Naive thymus-derived CD4-positive, alpha-beta T cell (primary cell): ENCODE measurements at regions of chr6 and their contacts with region 1.

Region 1: DNA sequence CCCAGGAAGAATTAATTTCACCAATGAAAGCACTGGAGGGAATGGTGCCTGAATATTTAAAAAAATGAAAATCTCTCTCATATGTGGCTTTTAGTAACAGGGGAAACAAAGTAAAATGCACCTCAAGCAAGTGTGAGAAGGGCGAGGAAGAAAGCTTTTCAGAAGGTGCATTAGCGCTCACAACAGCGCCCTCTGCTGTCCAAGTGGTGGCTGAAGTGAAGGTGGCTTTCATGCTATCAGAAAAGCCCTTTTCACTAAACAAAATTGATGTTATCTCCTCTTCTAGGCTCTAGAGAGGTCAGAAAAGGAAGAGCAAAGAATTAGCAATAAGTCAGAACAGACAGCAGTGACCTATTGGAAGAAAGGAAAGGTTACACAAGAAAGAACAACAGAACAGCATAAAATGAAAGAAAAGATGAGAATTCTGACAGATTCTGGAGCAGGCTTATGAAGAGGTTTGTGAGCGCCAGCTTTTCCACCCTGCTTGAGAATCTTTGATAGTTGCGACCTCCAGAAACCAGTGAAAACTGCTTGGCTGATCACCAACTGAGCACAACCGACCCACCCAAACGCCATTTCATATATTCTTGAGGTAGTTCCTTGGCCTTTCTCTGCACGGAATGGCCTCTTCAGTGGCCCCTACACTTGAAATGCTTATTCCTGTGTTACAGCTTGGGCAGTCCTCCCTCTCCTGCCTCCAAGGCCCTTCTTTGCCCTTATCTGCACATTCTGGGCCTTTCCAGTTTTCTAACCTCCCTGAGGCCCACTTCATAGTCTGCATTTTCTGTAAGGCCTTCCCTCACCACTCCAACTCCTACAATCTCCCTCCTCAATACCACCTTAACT is 45.3 kb downstream of the SMLR1 start:
- DNase-seq: peak; percentile 14 to 65 (median 52)
- ATAC-seq: peak; percentile 74
- H3K4me3 ChIP-seq: no peak overlapping the region
- H3K4me3 Mint-ChIP-seq: no peak overlapping the region
- H3K27ac ChIP-seq: no peak overlapping the region
- H3K27ac Mint-ChIP-seq: no peak overlapping the region
- H3K4me1 ChIP-seq: no peaks in the 10 kb centered on the region
- H3K4me1 Mint-ChIP-seq: peaks cover 2 to 6% (median 4%) of the 10 kb centered on the region in 7 donors
- H3K27me3 ChIP-seq: no peaks in the 10 kb centered on the region
- H3K27me3 Mint-ChIP-seq: no peaks in the 10 kb centered on the region

Region 2: GRCh38 chr6:130047088-130047995 is 825.1 kb before region 1 on chr6:
- CTCF ChIA-PET with region 1: no interaction called
- POLR2A ChIA-PET with region 1: no interaction called
- intact Hi-C with region 1: loop called in 1 of 2 experiments (anchors 1 kb)
- DNase-seq: no peak
- ATAC-seq: no peak
- H3K4me3 ChIP-seq: no peak overlapping the region
- H3K4me3 Mint-ChIP-seq: no peak overlapping the region
- H3K27ac ChIP-seq: no peak overlapping the region
- H3K27ac Mint-ChIP-seq: peak overlapping the region in 2 of 9 donors; percentile 12 to 24
- H3K4me1 ChIP-seq: no peaks in the 10 kb centered on the region
- H3K4me1 Mint-ChIP-seq: peaks cover 9 to 27% (median 15%) of the 10 kb centered on the region in 7 donors
- H3K27me3 ChIP-seq: no peaks in the 10 kb centered on the region
- H3K27me3 Mint-ChIP-seq: no peaks in the 10 kb centered on the region

Region 3: DNA sequence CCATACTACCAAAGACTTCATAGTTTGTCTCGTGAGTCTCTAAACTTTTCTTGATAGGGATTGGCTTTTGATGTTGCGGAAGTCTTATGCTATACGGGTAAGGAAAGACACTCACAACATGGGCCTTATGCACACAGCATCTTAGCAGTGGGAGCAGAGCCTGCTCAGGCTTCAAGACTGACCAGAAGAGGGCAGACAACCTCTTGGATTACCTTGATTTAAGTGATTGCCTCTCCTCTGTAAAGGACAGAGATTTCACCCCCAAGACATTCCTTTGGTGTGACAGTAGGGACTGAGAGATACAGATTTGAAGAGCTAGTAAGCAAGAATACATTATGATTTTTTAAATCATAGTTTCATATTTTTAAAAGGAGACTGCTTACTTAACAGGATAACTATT is 578.7 kb before region 1 on chr6:
- CTCF ChIA-PET with region 1: no interaction called
- POLR2A ChIA-PET with region 1: no interaction called
- intact Hi-C with region 1: loop called in 1 of 2 experiments (anchors 1 kb)
- DNase-seq: peak in 5 of 9 donors; percentile 24 to 53 (median 46)
- ATAC-seq: peak; percentile 73
- H3K4me3 ChIP-seq: no peak overlapping the region
- H3K4me3 Mint-ChIP-seq: no peak overlapping the region
- H3K27ac ChIP-seq: no peak overlapping the region
- H3K27ac Mint-ChIP-seq: peak overlapping the region in 1 of 9 donors; percentile 53
- H3K4me1 ChIP-seq: no peaks in the 10 kb centered on the region
- H3K4me1 Mint-ChIP-seq: peaks cover 0 to 3% (median 0%) of the 10 kb centered on the region in 7 donors
- H3K27me3 ChIP-seq: no peaks in the 10 kb centered on the region
- H3K27me3 Mint-ChIP-seq: peaks cover 0 to 27% (median 3%) of the 10 kb centered on the region in 5 donors

Region 4: DNA sequence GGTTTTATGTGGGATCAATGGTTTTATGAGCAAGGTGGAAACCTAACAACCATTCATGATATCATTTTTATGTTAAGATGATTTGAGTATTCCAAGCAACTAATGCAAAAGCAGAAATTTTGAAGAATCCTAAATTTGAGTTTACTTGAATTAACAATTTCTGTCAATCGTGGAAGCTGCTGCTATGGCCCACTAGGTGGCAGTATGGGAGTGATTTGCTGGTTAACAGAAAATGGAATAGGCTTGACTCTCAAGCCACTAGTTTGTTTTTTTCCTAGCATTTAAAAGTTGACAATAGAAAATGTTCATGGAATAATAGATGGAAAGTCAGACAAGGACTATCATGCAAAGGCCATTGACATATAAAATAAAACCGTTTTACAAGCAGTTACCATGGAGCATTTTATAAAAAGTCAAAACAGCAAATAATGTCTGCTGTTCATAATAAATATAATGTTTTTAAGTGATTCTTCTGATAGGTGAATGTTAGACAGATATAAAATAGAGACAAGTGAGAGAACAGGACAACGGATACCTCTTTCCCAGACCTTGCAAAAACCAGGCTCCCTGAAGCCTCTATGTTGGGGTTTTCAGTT is 549.7 kb before region 1 on chr6:
- CTCF ChIA-PET with region 1: interaction called, 6 read pairs
- POLR2A ChIA-PET with region 1: no interaction called
- intact Hi-C with region 1: loop called (anchors 1 kb)
- DNase-seq: peak in 8 of 9 donors; percentile 30 to 61 (median 56)
- ATAC-seq: peak; percentile 61
- H3K4me3 ChIP-seq: no peak overlapping the region
- H3K4me3 Mint-ChIP-seq: no peak overlapping the region
- H3K27ac ChIP-seq: no peak overlapping the region
- H3K27ac Mint-ChIP-seq: no peak overlapping the region
- H3K4me1 ChIP-seq: no peaks in the 10 kb centered on the region
- H3K4me1 Mint-ChIP-seq: peaks cover 0 to 16% (median 5%) of the 10 kb centered on the region in 7 donors
- H3K27me3 ChIP-seq: no peaks in the 10 kb centered on the region
- H3K27me3 Mint-ChIP-seq: peaks cover 0 to 33% (median 0%) of the 10 kb centered on the region in 5 donors